Activated naive CD8-positive, alpha-beta T cell treated with anti-CD3 and anti-CD28 coated beads, Interleukin-2, amount 10 ng/mL, durations not matched to agents 7 days and 5 days (primary cell): ENCODE measurements at regions of chr12 and their contacts with region 1.

Region 1: DNA sequence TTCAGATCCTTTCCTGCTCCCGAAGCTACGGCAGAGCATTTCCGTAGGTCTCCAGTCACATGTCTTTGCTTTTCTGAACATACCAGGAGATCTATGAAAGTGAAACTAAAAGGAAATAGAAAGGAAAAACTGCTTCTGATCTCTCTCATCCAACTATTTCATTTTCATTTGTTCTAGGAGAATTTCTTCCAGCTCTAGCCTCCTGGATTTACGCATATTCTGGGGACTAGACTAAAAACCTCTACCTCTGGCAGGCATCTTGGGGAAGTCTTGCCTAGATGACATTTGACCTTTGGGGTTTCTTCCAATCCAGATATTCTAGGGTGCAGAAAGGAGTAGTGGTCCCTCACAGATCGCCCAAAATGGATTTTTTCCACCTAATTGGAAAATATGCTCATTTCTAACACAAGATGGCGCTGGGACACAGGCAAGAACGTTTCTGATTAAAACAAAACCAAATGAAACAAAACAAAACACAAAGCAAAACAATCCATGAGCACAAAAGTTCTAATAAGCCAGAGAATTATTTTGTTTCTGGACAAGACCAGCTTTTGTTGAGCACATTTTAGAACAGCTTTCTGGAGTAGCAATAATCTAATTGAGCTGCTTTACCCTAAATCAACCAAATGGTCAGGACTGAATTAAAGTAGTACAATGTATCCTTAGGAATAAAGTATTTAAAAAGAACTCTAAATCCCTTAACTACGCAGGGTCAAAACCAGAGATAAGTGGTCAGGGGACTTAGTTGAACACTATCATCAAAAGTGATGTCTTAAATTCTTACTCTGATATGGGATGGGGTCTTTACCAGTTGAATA is 12.3 kb upstream of the PARP11 start:
- DNase-seq: no peak
- ATAC-seq: no peak
- H3K4me3 Mint-ChIP-seq: peak overlapping the region; percentile 55
- H3K27ac Mint-ChIP-seq: peak overlapping the region; percentile 1
- H3K4me1 Mint-ChIP-seq: peaks cover 7% of the 10 kb centered on the region
- H3K27me3 Mint-ChIP-seq: peaks cover 3% of the 10 kb centered on the region

Region 2: DNA sequence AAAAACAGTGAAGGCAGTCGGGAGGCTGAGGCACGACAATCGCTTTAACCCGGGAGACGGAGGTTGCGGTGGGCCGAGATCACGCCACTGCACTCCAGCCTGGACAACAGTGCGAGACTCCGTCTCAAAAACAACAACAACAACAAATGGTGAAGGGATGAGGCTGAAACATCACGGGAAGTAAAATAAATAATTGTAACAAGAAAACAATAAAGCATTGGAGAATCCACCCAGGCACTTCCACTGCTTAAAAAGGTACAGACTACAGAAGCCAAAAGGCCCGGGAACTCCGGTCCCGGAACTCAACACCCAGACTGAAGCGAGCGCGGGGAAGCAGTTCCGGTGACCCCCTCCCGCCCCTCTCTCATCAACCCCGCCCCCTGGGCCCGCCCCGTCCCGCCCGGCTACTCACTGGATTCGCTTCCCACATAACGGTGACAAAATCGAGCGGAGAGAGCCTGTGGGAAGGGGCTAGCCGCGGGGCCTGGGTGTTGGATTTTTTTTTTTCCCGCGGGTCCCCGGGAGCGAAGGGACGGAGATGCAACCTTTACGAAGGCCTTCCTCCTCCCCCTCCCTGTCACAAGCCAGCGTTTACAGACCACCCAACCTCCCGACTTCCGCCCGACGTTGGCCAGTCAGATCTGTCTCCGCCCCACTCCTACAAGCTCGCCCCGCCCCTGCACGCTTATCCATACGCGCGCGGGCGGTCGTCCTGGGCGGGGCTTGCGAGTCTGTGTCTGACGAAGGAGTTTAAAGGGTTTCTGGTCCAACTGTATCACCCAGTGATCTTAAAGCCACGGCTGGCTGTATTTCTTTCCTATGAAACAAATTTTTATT is 12.5 kb before region 1 on chr12 and contains the start of gene PARP11:
- POLR2A ChIA-PET with region 1: interaction called, 10 read pairs
- DNase-seq: peak; percentile 98
- ATAC-seq: peak; percentile 90
- H3K4me3 Mint-ChIP-seq: peak within 1 kb of the TSS; percentile 98
- H3K27ac Mint-ChIP-seq: peak within 1 kb of the TSS; percentile 97
- H3K4me1 Mint-ChIP-seq: peaks cover 37% of the 10 kb centered on the region
- H3K27me3 Mint-ChIP-seq: no peaks in the 10 kb centered on the region
- total RNA-seq, gene PARP11: 40.2 to 40.7 TPM

Region 3: DNA sequence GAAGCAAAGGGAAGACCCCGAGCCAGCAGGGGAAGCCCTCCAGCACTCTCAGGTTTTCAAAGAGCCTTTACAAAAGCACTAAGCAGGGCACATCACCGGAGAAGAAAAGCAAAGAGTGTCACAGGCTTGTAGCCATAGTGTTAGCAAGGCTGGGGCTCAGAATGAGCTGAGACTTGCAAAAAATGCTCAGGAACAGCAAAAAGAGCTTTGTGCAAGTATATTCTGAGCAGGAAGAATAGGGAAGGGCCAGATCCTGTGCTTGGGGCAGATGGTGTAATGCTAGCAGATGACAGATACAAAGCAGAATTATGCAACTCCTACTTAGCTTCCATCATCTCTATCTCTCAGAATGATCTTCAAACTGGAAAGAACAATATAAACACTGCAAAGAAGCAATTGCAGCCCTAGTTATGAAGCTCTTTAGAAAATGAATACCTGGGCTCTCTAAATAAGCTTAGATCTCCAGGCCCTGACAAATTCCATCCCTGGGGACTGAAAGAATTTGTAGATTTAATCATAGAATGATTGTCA is 11.4 kb after region 1 on chr12:
- POLR2A ChIA-PET with region 1: interaction called, 14 read pairs
- DNase-seq: no peak
- ATAC-seq: peak; percentile 54
- H3K4me3 Mint-ChIP-seq: peak overlapping the region; percentile 62
- H3K27ac Mint-ChIP-seq: peak overlapping the region; percentile 91
- H3K4me1 Mint-ChIP-seq: peaks cover 31% of the 10 kb centered on the region
- H3K27me3 Mint-ChIP-seq: no peaks in the 10 kb centered on the region

Region 4: DNA sequence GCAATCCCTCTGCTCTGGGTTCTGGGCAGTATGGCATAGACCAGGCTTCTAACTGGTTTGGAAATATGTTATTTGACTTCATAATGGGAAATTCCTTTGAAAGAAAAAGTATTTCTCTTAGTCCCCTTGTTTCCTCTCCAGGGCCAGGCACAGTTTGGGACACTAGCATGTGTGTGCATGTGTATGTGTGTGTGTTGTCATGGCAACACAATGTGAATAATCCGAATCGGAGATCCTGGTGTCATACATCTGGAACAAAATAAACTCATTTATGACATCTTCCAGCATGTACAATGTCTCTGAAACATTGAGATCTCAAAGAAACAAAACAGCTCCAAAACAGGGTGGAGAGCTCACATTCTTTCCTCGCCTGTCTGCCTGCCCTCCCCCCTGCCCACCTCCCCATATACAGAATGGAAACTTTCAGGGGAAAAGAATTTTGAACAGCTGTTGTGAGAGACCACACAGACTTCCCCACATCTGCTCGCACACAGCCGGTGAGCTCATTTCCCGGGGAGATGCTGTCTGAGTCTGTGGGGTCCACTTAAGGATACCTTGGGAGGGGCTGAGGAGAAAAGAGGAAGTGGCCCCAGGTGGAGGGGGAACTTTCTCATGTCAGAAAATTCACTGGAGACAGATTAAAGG is 43.2 kb after region 1 on chr12:
- POLR2A ChIA-PET with region 1: no interaction called
- DNase-seq: no peak
- ATAC-seq: no peak
- H3K4me3 Mint-ChIP-seq: no peak overlapping the region
- H3K27ac Mint-ChIP-seq: no peak overlapping the region
- H3K4me1 Mint-ChIP-seq: peaks cover 17% of the 10 kb centered on the region
- H3K27me3 Mint-ChIP-seq: peaks cover 4% of the 10 kb centered on the region

Region 5: GRCh38 chr12:3947781-3948180 is 62.3 kb after region 1 on chr12:
- POLR2A ChIA-PET with region 1: no interaction called
- DNase-seq: no peak
- ATAC-seq: peak; percentile 44
- H3K4me3 Mint-ChIP-seq: peak overlapping the region; percentile 18
- H3K27ac Mint-ChIP-seq: peak overlapping the region; percentile 68
- H3K4me1 Mint-ChIP-seq: peaks cover 28% of the 10 kb centered on the region
- H3K27me3 Mint-ChIP-seq: peaks cover 4% of the 10 kb centered on the region

Region 6: GRCh38 chr12:4251216-4251891 is 365.9 kb after region 1 on chr12:
- POLR2A ChIA-PET with region 1: no interaction called
- DNase-seq: no peak
- ATAC-seq: peak; percentile 52
- H3K4me3 Mint-ChIP-seq: no peak overlapping the region
- H3K27ac Mint-ChIP-seq: no peak overlapping the region
- H3K4me1 Mint-ChIP-seq: peaks cover 12% of the 10 kb centered on the region
- H3K27me3 Mint-ChIP-seq: peaks cover 7% of the 10 kb centered on the region